H1 (cell line): ENCODE measurements at regions of chr17 and their contacts with region 1.

Region 1: GRCh38 chr17:64005734-64006167 is 7.6 kb downstream of the PRR29 start:
- DNase-seq: no peak
- H3K4me3 ChIP-seq: no peak overlapping the region
- H3K27ac ChIP-seq: no peak overlapping the region
- H3K4me1 ChIP-seq: peaks cover 0 to 12% (median 5%) of the 10 kb centered on the region in 4 experiments; a peak in 4 of 7 replicates
- H3K27me3 ChIP-seq: no peaks in the 10 kb centered on the region; a peak in 1 of 7 replicates
- CTCF ChIP-seq: no peak
- EP300 ChIP-seq: no peak
- POLR2A ChIP-seq: no peak
- RAD21 ChIP-seq: no peak

Region 2: GRCh38 chr17:63925645-63926044 is 80.1 kb before region 1 on chr17:
- CTCF ChIA-PET with region 1: no interaction called
- POLR2A ChIA-PET with region 1: no interaction called
- DNase-seq: no peak
- H3K4me3 ChIP-seq: no peak overlapping the region
- H3K27ac ChIP-seq: no peak overlapping the region
- H3K4me1 ChIP-seq: peaks cover 0 to 2% (median under 1%) of the 10 kb centered on the region in 4 experiments; a peak in 4 of 7 replicates
- H3K27me3 ChIP-seq: no peaks in the 10 kb centered on the region
- CTCF ChIP-seq: no peak
- EP300 ChIP-seq: no peak
- POLR2A ChIP-seq: no peak
- RAD21 ChIP-seq: no peak

Region 3: DNA sequence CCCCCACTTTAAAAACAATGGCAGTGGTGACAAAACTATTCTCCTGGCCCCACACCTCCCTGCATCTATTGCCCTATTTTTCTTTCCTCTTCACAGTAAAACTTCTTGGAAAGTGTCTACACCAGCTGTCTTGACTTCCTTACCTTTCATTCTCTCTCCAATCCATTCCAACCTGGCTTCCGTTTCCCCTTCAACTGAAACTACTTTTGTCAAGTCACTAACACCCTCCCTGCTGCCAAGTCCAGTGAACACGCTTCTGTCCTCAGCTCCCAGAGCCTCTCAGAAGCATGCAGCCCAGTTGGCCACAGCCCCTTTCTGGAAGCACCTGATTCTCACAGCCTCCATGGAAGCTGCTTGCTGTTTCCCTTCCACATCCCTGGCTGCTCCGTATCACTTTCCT is 29.0 kb before region 1 on chr17:
- CTCF ChIA-PET with region 1: no interaction called
- POLR2A ChIA-PET with region 1: no interaction called
- DNase-seq: no peak
- H3K4me3 ChIP-seq: no peak overlapping the region
- H3K27ac ChIP-seq: no peak overlapping the region
- H3K4me1 ChIP-seq: peaks cover 0 to 7% (median under 1%) of the 10 kb centered on the region in 4 experiments; a peak in 4 of 7 replicates
- H3K27me3 ChIP-seq: no peaks in the 10 kb centered on the region; a peak in 1 of 7 replicates
- CTCF ChIP-seq: no peak
- EP300 ChIP-seq: no peak
- POLR2A ChIP-seq: no peak
- RAD21 ChIP-seq: no peak

Region 4: DNA sequence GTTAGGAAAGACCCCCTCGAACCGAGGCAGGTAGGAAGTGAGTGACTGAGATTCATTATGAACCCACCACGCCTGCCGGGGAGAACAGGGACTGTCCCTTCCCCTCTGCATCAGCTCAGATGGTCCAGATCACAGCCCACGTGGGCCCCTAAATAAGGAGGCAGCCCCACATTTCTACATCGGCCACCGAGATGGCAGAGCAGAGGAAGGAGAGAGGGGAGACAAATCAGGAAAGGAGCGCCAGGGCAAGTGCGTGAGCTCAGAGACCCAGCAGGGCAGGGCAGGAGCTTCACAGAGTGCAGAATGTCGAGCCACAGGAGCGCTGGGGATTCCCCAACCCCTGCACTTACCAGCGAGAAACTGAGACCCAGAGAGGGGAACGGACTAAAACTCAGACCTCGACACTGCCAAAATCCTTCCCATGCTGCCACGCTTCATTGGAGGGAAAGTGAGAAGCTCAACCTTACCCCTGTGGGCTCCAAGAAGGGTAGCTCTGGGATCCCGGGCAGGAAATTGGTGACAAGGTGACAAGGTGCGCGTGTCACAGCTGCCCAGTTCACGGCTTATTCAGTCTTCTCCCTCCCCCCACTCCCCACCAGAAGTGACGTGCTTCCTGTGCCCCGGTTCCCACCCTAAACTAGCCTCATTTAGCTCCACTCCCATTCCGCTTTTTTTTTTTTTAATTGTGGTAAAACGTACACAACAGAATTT is 14.5 kb after region 1 on chr17 and contains the start of gene ICAM2:
- CTCF ChIA-PET with region 1: interaction called, 26 read pairs
- POLR2A ChIA-PET with region 1: no interaction called
- DNase-seq: no peak
- H3K4me3 ChIP-seq: peak within 1 kb of the TSS in 3 of 4 experiments; percentile 3 to 17 (median 3); a peak in 2 of 8 replicates
- H3K27ac ChIP-seq: no peak within 1 kb of the TSS
- H3K4me1 ChIP-seq: peaks cover 0 to 5% (median 3%) of the 10 kb centered on the region in 4 experiments; a peak in 5 of 7 replicates
- H3K27me3 ChIP-seq: no peaks in the 10 kb centered on the region
- CTCF ChIP-seq: no peak
- EP300 ChIP-seq: no peak
- POLR2A ChIP-seq: no peak
- RAD21 ChIP-seq: no peak
- total RNA-seq, gene ICAM2: 0.45 TPM in 1 of 2 replicates, not detected in the other